GM10248 (cell line): ENCODE measurements at regions of chr5 and their contacts with region 1.

Region 1: DNA sequence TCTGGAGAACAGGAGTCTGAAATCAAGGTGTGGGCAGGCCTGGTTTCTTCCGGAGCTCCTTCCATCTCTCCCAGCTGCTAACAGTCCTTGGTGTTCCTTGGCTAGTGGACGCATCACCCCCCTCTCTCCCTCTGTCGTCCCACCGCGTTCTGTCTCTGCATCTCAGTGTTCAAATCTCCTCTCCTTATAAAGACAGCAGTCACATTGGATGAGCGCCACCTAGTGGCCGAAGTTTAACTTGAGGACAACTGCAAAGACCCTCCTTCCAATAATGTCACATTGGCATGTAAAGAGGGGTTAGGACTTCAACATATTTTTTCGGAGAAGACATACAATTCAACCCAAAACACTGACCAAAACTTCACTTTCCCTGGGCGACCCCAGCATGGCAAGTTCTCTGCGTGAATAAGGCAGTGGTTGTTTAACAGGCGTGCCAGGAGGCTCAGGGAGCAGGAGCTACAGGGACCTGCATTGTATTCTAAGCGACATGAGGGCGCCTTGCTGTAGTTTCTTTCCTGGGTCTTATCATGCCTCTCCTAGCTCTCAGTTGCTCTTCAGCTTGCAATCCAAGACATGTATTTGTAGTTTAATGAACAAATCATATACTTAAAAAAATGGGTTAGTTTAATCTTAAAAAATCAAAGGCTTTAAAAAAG is 27.9 kb upstream of the BASP1 start:
- DNase-seq: peak; percentile 57
- CTCF ChIP-seq: peak; percentile 83

Region 2: DNA sequence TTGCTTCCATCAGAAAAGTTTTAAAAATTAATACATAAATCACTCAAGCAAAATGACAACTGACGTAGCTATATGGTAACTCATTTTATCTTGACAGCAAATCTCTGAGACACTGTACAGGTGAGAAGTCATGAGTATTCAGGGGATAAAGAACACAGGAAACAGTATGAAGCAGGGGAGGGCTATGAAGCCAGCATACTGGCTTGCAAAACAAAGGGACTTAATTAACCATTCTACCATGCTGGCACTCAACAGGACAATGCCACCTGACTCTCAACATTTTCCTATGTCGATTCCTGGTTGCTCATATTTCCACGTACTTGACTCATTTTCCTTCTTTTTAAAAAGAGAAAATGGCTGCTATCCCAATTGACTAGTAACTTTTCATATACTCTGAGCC is 421.3 kb before region 1 on chr5:
- CTCF ChIA-PET with region 1: no interaction called
- POLR2A ChIA-PET with region 1: no interaction called
- DNase-seq: no peak
- CTCF ChIP-seq: no peak

Region 3: GRCh38 chr5:16784843-16785791 is 404.4 kb before region 1 on chr5:
- CTCF ChIA-PET with region 1: interaction called, 18 read pairs
- POLR2A ChIA-PET with region 1: no interaction called
- DNase-seq: peak; percentile 28
- CTCF ChIP-seq: no peak

Region 4: DNA sequence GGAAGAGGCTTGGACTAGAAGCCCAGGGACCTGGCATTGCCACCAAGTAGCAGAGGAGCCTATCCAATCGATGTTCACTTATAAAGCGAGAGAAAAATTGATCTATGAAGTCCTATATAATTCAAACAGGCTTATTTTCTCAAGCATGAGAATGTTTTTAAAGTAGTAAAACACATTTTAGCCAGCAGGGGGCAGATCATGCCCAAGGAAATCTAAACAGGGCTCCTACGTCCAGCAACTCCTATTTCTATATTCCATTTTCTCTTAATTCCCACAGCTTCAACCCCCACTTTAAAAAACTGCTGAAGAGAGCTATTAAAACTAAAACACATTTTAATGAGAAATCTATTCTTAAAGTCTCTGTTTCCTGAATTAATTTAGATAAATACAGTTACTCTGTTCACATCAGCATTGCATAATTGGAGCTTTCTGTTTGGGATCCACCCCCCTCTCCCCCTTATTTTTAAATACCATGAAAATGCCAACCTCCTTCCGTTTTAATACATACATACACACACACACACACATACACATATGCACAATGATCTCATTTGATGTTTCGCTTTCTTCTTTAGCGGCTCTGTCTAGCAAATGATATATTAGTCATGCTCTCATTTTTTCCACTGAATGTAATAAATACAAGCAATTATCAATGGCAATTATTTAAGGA is 398.3 kb before region 1 on chr5:
- CTCF ChIA-PET with region 1: interaction called, 34 read pairs
- POLR2A ChIA-PET with region 1: no interaction called
- DNase-seq: peak; percentile 53
- CTCF ChIP-seq: peak; percentile 44

Region 5: GRCh38 chr5:17204133-17204489 is 14.6 kb after region 1 on chr5:
- CTCF ChIA-PET with region 1: interaction called, 35 read pairs
- POLR2A ChIA-PET with region 1: no interaction called
- DNase-seq: no peak
- CTCF ChIP-seq: no peak

Region 6: GRCh38 chr5:17379100-17379951 is 189.8 kb after region 1 on chr5:
- CTCF ChIA-PET with region 1: no interaction called
- POLR2A ChIA-PET with region 1: no interaction called
- DNase-seq: no peak
- CTCF ChIP-seq: no peak